Heart left ventricle (tissue), 16 donors: ENCODE measurements at regions of chr3 and their contacts with region 1.

Region 1: DNA sequence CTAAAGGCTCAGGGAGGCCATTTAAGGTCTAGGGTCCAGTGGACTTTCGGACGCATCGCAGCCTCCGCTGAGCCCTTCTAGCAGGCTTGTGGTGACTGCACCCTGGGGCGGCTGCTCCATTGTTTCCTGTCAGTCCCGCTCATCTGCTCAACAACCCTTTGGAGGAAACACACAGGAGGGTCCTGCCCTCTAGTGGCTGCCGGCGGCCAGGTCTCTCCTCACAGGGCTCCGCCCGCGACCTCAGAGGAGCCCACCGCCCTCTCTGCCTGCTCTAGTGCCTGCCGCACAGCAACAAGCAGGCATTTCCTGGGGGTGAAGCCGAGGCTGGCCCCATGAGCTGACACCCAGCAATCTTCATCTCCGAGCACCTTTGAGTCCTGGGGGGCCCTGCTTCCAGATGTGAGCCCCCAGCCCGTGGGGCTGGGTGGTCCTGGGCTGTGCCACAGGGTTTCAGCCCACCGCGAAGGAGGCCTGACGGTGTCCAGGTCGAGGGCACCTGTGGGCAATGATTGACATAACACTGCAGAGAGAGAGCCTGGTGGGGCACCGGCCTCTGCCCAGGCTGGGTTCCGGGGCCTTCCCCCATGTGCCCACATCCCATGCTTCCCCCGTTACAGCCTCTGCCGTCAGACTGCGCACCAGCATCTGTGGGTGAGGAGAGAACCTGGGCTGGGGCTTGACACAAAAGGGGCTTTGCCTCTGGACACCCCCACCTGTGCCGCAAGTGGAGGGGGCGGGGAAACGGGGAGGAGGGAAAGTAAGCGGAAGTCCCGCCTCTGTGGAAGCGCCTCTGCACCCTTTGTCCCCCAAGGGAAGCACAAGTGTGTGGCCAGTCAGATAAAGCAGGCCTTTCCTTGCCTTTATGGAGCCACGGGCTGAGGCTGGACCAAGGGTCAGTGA is 27.0 kb upstream of the SFMBT1 start:
- DNase-seq: peak; percentile 81 to 93 (median 87)
- ATAC-seq: peak; percentile 92 to 96 (median 94)
- H3K4me3 ChIP-seq: peak overlapping the region; percentile 45 to 77 (median 66)
- H3K27ac ChIP-seq: peak overlapping the region in 10 of 12 donors; percentile 19 to 75 (median 64)
- H3K4me1 ChIP-seq: peaks cover 0 to 19% (median 12%) of the 10 kb centered on the region in 12 donors
- H3K27me3 ChIP-seq: no peaks in the 10 kb centered on the region
- CTCF ChIP-seq: peak; percentile 91 to 99 (median 93)
- POLR2A ChIP-seq: no peak

Region 2: GRCh38 chr3:52730681-52731080 is 342.2 kb before region 1 on chr3:
- intact Hi-C with region 1: loop called in 1 of 10 experiments (anchors 10 kb)
- DNase-seq: no peak
- ATAC-seq: no peak
- H3K4me3 ChIP-seq: no peak overlapping the region
- H3K27ac ChIP-seq: no peak overlapping the region
- H3K4me1 ChIP-seq: peaks cover 0 to 5% (median 0%) of the 10 kb centered on the region in 12 donors
- H3K27me3 ChIP-seq: no peaks in the 10 kb centered on the region
- CTCF ChIP-seq: no peak
- POLR2A ChIP-seq: no peak

Region 3: GRCh38 chr3:52770496-52771333 is 302.2 kb before region 1 on chr3 and contains the start of gene NEK4:
- intact Hi-C with region 1: loop called in 1 of 10 experiments (anchors 10 kb)
- DNase-seq: peak; percentile 93 to 98 (median 96)
- ATAC-seq: peak; percentile 99 to 100 (median 100)
- H3K4me3 ChIP-seq: peak within 1 kb of the TSS; percentile 69 to 96 (median 88)
- H3K27ac ChIP-seq: peak within 1 kb of the TSS; percentile 35 to 92 (median 80)
- H3K4me1 ChIP-seq: peaks cover 0 to 29% (median 12%) of the 10 kb centered on the region in 12 donors
- H3K27me3 ChIP-seq: no peaks in the 10 kb centered on the region
- CTCF ChIP-seq: peak in 1 of 12 donors; percentile 14
- POLR2A ChIP-seq: peak in 1 of 2 donors; percentile 78
- total RNA-seq, gene NEK4: 13.1 to 21.5 (median 15.2) TPM

Region 4: DNA sequence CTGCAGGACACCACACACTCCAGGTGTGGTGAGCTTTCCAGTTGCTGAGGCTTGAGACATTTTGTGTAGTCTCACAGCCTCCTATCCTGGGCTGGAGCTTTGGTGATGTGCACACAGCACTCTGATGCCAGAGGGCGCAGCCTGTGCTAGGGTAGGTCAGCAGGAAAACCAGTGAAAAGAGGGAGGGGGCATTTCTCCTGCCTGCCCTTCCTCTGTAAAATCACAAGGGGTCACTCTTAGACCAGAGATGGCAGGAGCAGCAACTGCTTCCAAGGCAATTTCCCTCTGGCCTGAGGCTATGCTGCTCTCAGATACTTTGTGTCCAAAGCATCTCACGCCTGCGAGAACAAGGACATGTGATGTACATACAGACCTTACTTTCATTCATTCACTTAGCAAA is 221.6 kb before region 1 on chr3:
- intact Hi-C with region 1: loop called (anchors 1 to 10 kb)
- DNase-seq: peak in 1 of 5 donors; percentile 20
- ATAC-seq: peak; percentile 39 to 63 (median 55)
- H3K4me3 ChIP-seq: no peak overlapping the region
- H3K27ac ChIP-seq: no peak overlapping the region
- H3K4me1 ChIP-seq: peaks cover 0 to 5% (median 0%) of the 10 kb centered on the region in 12 donors
- H3K27me3 ChIP-seq: no peaks in the 10 kb centered on the region
- CTCF ChIP-seq: peak; percentile 13 to 61 (median 44)
- POLR2A ChIP-seq: no peak

Region 5: DNA sequence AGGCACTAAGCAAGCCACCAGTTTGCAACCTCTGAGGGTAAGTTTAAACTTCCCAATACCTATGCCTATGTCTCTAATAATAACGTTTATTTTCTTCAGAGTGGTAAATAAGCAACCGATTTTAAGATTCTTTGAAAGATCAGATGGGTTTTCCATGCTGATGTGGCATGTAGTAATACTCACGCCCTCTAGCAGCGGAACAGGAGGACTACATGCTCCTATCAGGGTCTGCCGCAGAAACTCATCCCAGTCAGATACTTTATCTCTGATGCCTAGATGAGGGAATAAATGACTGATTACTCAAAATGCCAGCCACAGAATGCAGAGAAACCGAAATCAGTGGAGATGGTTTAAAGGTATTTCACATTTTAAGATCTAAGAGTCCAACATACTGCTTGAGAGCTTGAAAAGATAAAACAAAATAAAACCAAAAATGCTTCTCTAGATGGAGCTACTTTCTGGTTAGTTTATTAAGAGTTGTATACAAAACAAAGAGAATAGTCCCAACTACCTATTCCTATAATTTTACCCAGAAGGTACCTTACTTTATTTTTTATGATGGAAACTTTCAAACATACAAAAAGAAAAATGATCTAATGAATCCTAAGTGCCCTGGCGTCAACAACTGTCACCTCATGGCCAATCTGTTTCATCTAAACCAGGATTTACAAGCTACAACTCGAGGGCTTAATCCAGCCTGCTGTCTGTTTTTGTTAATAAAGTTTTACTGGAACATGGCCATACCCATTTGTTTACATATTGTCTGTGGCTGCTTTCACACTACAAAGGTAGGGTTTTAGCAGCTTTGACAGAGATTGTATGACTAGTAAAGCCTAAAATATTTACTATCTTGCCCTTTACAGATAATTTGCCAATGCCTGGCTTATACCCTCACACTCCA is 138.0 kb before region 1 on chr3:
- intact Hi-C with region 1: loop called in 6 of 10 experiments (anchors 5 to 10 kb)
- DNase-seq: peak in 3 of 5 donors; percentile 27 to 34 (median 32)
- ATAC-seq: peak in 3 of 4 donors; percentile 65 to 85 (median 82)
- H3K4me3 ChIP-seq: no peak overlapping the region
- H3K27ac ChIP-seq: no peak overlapping the region
- H3K4me1 ChIP-seq: peaks cover 0 to 5% (median 0%) of the 10 kb centered on the region in 12 donors
- H3K27me3 ChIP-seq: no peaks in the 10 kb centered on the region
- CTCF ChIP-seq: peak; percentile 59 to 84 (median 70)
- POLR2A ChIP-seq: no peak